Caco-2 (cell line): ENCODE measurements at regions of chr1 and their contacts with region 1.

Region 1: DNA sequence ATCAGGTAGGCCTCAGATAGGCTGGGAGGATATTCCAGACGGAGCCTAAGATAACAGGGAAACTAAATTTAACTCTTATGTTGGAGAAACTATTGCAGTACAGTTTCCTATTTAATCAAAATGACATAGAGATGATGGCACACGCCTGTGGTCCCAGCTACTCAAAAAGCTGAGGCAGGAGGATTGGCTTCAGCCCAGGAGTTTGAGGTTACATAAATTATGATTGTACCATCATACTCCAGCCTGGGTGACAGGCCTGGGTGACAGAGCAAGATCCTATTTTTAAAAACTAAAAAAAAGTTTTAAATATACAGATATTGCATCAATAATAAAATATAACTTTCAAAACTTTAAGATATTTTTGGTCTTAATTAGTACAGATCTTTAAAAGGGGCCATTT is 25.2 kb upstream of the TAL1 start:
- DNase-seq: no peak
- H3K4me3 ChIP-seq: no peak overlapping the region
- H3K4me3 Mint-ChIP-seq: no peak overlapping the region
- H3K27ac Mint-ChIP-seq: no peak overlapping the region
- H3K4me1 ChIP-seq: peaks cover 26% of the 10 kb centered on the region
- H3K4me1 Mint-ChIP-seq: no peaks in the 10 kb centered on the region
- H3K27me3 ChIP-seq: no peaks in the 10 kb centered on the region
- H3K27me3 Mint-ChIP-seq: no peaks in the 10 kb centered on the region
- CTCF ChIP-seq: no peak

Region 2: DNA sequence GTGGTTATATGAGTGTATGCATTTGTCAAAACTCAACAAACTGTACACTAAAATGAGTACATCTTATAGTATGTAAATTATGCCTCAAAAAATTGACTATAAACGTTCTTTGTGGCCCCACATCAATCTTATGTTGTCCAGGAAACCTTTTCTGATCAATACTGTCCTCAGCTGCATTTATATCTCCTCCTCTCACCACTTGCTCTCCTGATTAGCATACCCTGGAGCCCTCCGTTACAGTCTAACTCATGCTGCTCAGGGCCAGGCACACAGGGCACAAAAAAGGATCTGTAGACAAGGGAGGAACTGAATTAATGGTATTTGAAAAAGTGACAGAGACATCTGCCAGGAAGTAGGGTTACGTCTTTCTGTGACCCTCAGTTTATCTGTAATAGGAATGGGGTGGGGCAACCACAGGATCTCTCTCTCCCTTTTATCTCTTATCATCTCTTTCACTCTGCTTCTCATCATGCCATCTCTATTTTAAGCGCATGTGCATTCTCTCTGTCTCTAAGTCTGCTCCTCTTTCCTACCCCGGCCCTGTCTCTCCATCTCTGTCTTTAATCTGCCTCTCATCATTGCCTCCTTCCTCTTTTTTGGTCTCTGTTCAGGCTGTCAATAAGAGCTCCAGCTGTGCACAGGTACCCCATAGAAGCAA is 18.2 kb before region 1 on chr1:
- CTCF ChIA-PET with region 1: interaction called, 3 read pairs
- POLR2A ChIA-PET with region 1: no interaction called
- intact Hi-C with region 1: loop called (anchors 2 kb)
- DNase-seq: no peak
- H3K4me3 ChIP-seq: no peak overlapping the region
- H3K4me3 Mint-ChIP-seq: no peak overlapping the region
- H3K27ac Mint-ChIP-seq: no peak overlapping the region
- H3K4me1 ChIP-seq: peaks cover 11% of the 10 kb centered on the region
- H3K4me1 Mint-ChIP-seq: peaks cover 11% of the 10 kb centered on the region
- H3K27me3 ChIP-seq: no peaks in the 10 kb centered on the region
- H3K27me3 Mint-ChIP-seq: no peaks in the 10 kb centered on the region
- CTCF ChIP-seq: no peak

Region 3: DNA sequence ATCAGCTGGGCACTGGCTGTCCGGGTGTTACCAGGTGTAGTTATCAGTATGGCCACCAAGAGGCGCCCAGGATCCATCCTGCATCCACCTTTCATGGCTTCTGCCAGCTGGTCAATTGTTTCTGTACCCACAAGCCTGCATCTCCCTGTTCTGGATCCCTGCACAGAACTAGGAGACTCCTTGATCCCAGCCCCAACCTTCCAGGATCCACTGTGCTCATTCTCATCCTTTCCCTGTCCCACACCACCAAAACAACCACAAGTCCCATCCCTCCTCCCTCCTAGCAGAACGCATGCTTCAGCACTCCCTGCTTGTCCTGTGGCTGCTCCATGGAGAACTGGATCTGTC is 131.6 kb after region 1 on chr1:
- CTCF ChIA-PET with region 1: no interaction called
- POLR2A ChIA-PET with region 1: no interaction called
- intact Hi-C with region 1: no loop called
- DNase-seq: peak; percentile 67 to 74
- H3K4me3 ChIP-seq: no peak overlapping the region
- H3K4me3 Mint-ChIP-seq: peak overlapping the region; percentile 15
- H3K27ac Mint-ChIP-seq: peak overlapping the region; percentile 69
- H3K4me1 ChIP-seq: peaks cover 48% of the 10 kb centered on the region
- H3K4me1 Mint-ChIP-seq: peaks cover 52% of the 10 kb centered on the region
- H3K27me3 ChIP-seq: no peaks in the 10 kb centered on the region
- H3K27me3 Mint-ChIP-seq: no peaks in the 10 kb centered on the region
- CTCF ChIP-seq: peak; percentile 70 to 74